AG04450 (cell line): ENCODE measurements at regions of chr4 and their contacts with region 1.

Region 1: GRCh38 chr4:151117371-151117962 is 18.0 kb downstream of the RPS3A start:
- DNase-seq: peak; percentile 24
- H3K4me3 ChIP-seq: no peak overlapping the region
- H3K27ac ChIP-seq: no peak overlapping the region
- H3K27me3 ChIP-seq: no peaks in the 10 kb centered on the region
- CTCF ChIP-seq: peak; percentile 82

Region 2: DNA sequence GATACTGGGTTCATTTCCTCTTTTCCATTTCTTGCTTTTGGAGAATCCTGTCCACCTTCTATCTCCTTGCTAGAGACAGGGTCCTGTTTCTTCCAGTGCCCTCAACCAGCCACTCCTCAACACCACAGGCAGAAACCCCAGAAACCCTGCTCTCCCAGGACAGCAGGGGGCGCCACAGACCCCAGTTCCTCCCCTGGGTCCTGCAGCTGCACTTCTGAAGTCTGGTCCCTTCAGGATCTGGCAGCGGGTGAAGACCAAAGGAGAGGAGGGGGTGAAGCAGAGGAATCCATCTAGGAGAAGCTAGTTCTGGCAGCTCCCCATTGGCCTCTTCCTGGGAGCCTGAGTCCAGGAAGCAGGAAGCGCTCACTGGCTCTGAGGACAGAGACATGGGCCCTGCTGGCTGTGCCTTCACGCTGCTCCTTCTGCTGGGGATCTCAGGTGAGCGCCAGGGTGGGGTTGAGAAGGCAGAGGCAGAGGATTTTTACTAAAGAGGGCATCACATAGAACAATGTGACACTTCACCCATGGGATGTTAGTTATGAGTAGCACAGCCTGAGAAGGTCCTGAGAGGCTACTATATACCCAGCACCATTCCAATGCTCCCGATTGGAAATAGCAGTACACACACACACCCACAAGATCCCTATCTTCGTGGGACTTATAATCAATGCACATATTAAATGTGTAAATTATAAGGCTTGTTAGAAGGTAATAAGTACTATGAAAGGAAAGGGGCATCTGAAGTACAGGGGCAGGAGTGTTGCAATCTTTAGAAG is 159.5 kb after region 1 on chr4 and contains the start of gene PRSS48:
- CTCF ChIA-PET with region 1: interaction called, 16 read pairs
- POLR2A ChIA-PET with region 1: no interaction called
- DNase-seq: no peak
- H3K4me3 ChIP-seq: no peak within 1 kb of the TSS
- H3K27ac ChIP-seq: no peak within 1 kb of the TSS
- H3K27me3 ChIP-seq: no peaks in the 10 kb centered on the region
- CTCF ChIP-seq: peak; percentile 80
- polyA plus RNA-seq, gene PRSS48: not detected in 2 replicates

Region 3: GRCh38 chr4:151362404-151363164 is 245.1 kb after region 1 on chr4:
- CTCF ChIA-PET with region 1: interaction called, 21 read pairs
- POLR2A ChIA-PET with region 1: no interaction called
- DNase-seq: peak; percentile 59
- H3K4me3 ChIP-seq: no peak overlapping the region
- H3K27ac ChIP-seq: no peak overlapping the region
- H3K27me3 ChIP-seq: peaks cover 3% of the 10 kb centered on the region
- CTCF ChIP-seq: peak; percentile 99

Region 4: DNA sequence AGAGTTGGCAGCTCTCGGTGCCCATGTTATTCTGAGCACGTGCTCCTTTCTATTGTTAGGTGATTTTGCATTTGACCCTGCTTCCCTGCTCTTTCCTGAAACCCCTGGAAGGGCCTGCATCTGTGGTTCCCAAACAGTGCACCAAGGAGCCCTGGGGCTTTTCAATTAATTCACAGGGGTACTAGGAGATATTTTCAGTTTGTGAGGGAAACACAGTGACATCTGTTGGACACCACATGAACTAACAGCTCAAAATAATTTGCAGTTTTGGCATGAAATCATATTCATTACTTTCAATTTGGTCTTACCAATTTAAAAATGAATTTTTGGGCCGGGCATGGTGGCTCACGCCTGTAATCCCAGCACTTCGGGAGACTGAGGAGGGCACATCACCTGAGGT is 486.8 kb after region 1 on chr4:
- CTCF ChIA-PET with region 1: interaction called, 25 read pairs
- POLR2A ChIA-PET with region 1: no interaction called
- DNase-seq: no peak
- H3K4me3 ChIP-seq: no peak overlapping the region
- H3K27ac ChIP-seq: no peak overlapping the region
- H3K27me3 ChIP-seq: peaks cover 11% of the 10 kb centered on the region
- CTCF ChIP-seq: peak; percentile 63

Region 5: DNA sequence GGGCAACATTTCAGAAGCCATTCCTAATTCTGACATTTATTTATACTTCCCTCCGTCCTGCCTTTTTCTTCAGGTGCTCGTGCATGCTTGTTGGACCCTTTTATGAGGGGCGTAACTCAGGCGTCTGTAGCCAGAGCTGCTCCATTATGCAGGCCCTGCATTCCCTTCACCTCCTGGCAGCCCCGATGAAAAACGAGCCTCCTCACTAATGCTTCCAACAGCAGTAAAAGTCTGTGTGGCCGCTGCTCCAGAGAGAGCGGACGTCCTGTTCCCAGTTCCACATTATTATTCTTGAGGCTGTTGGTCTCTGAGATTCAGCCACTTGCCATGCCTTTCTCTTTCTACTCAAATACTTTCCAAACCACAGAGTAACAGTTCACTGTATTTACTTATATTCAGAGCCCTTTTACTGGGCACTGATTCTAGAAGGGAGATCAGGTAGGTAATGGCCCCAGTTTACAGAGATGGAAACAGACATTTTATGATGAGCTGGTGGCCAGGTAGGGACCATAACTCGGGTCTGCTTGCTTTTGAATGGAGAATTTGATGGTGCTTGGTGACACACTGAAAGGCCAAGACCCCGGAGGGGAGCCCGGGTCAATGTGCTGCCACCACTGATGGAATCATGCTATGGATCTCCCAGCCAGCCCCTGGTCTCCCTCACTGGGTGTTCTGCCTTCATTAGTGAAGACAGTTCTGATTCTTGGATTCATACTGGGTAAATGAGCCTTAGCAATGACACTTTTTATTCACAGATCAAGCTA is 542.3 kb after region 1 on chr4:
- CTCF ChIA-PET with region 1: no interaction called
- POLR2A ChIA-PET with region 1: no interaction called
- DNase-seq: no peak
- H3K4me3 ChIP-seq: no peak overlapping the region
- H3K27ac ChIP-seq: no peak overlapping the region
- H3K27me3 ChIP-seq: no peaks in the 10 kb centered on the region
- CTCF ChIP-seq: no peak